Activated CD8-positive, alpha-beta T cell treated with anti-CD3 and anti-CD28 coated beads, Interleukin-2, amount 10 ng/mL, durations not matched to agents 7 days and 5 days (primary cell): ENCODE measurements at regions of chr14 and their contacts with region 1.

Region 1: GRCh38 chr14:81170104-81170828 is 50.5 kb downstream of the GTF2A1 start:
- DNase-seq: peak; percentile 92
- ATAC-seq: peak; percentile 100
- H3K4me3 Mint-ChIP-seq: peak overlapping the region; percentile 93
- H3K27ac Mint-ChIP-seq: peak overlapping the region; percentile 92
- H3K4me1 Mint-ChIP-seq: peaks cover 42% of the 10 kb centered on the region
- H3K27me3 Mint-ChIP-seq: no peaks in the 10 kb centered on the region

Region 2: DNA sequence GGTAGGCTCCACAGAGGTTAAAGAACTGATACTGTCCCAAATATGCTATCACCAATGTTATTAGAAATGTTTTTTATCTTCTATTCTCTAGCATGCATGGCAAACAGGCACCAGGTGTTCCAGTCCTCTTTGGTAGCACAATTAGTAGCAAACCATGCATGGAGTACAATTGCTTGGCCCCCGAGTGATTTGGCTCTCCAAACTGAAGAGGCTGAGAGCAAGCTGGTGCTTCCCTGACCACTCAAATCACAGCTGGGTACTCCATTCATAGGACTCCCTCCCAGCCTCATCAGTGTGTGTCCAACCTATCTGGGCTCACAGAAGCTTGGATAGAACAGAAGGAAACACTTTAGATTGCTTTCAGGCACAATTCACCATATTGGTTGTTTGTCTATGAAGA is 1052.4 kb before region 1 on chr14:
- CTCF ChIA-PET with region 1: no interaction called
- POLR2A ChIA-PET with region 1: no interaction called
- DNase-seq: no peak
- ATAC-seq: no peak
- H3K4me3 Mint-ChIP-seq: no peak overlapping the region
- H3K27ac Mint-ChIP-seq: no peak overlapping the region
- H3K4me1 Mint-ChIP-seq: no peaks in the 10 kb centered on the region
- H3K27me3 Mint-ChIP-seq: no peaks in the 10 kb centered on the region

Region 3: DNA sequence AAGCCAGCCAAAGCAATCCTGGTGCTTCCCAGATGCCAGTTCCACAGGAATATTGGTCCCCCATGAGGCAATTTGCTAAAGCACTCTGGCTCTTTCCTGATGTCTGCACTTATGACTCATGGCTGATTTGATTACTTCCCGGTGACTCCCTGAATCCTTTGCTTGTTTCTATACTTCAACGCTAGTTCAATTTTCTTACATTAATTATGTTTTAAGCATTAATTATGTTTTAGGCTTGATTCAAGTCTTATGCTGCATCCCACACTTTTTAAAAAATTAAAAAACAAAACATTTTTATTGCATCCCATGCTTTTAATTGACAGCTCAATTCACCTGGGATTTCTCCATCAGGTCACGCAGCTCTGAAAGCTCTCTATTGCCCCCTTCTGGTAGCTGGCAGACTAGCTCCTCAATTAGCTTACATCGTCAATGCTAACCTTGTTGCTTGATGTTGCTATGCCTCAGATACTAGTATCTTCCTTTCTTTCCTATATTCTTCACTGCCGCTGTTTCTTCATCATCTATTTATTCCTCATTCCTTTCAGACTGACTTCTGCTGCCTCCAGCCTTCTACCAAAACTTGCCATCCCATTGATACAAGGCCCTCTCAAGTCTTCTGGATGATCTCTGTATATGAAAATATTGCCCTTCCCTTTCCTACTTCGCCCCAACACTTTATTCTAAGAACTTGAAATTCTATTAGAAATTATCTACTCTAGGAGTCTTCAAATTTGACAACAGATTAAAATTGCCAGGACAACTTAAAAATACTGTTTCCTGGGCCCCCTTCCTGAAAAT is 182.8 kb before region 1 on chr14:
- CTCF ChIA-PET with region 1: interaction called, 36 read pairs
- POLR2A ChIA-PET with region 1: interaction called, 5 read pairs
- DNase-seq: peak; percentile 77
- ATAC-seq: peak; percentile 78
- H3K4me3 Mint-ChIP-seq: no peak overlapping the region
- H3K27ac Mint-ChIP-seq: no peak overlapping the region
- H3K4me1 Mint-ChIP-seq: peaks cover 6% of the 10 kb centered on the region
- H3K27me3 Mint-ChIP-seq: peaks cover 3% of the 10 kb centered on the region

Region 4: GRCh38 chr14:81042438-81042837 is 127.8 kb before region 1 on chr14:
- CTCF ChIA-PET with region 1: no interaction called
- POLR2A ChIA-PET with region 1: no interaction called
- DNase-seq: no peak
- ATAC-seq: no peak
- H3K4me3 Mint-ChIP-seq: no peak overlapping the region
- H3K27ac Mint-ChIP-seq: no peak overlapping the region
- H3K4me1 Mint-ChIP-seq: no peaks in the 10 kb centered on the region
- H3K27me3 Mint-ChIP-seq: peaks cover 9% of the 10 kb centered on the region

Region 5: GRCh38 chr14:81147140-81147897 is 22.9 kb before region 1 on chr14:
- CTCF ChIA-PET with region 1: interaction called, 11 read pairs
- POLR2A ChIA-PET with region 1: no interaction called
- DNase-seq: no peak
- ATAC-seq: no peak
- H3K4me3 Mint-ChIP-seq: no peak overlapping the region
- H3K27ac Mint-ChIP-seq: peak overlapping the region; percentile 39
- H3K4me1 Mint-ChIP-seq: peaks cover 13% of the 10 kb centered on the region
- H3K27me3 Mint-ChIP-seq: peaks cover 3% of the 10 kb centered on the region

Region 6: GRCh38 chr14:81187832-81188522 is 17.7 kb after region 1 on chr14:
- CTCF ChIA-PET with region 1: interaction called, 66 read pairs
- POLR2A ChIA-PET with region 1: interaction called, 3 read pairs
- DNase-seq: no peak
- ATAC-seq: no peak
- H3K4me3 Mint-ChIP-seq: no peak overlapping the region
- H3K27ac Mint-ChIP-seq: no peak overlapping the region
- H3K4me1 Mint-ChIP-seq: peaks cover 34% of the 10 kb centered on the region
- H3K27me3 Mint-ChIP-seq: no peaks in the 10 kb centered on the region

Region 7: DNA sequence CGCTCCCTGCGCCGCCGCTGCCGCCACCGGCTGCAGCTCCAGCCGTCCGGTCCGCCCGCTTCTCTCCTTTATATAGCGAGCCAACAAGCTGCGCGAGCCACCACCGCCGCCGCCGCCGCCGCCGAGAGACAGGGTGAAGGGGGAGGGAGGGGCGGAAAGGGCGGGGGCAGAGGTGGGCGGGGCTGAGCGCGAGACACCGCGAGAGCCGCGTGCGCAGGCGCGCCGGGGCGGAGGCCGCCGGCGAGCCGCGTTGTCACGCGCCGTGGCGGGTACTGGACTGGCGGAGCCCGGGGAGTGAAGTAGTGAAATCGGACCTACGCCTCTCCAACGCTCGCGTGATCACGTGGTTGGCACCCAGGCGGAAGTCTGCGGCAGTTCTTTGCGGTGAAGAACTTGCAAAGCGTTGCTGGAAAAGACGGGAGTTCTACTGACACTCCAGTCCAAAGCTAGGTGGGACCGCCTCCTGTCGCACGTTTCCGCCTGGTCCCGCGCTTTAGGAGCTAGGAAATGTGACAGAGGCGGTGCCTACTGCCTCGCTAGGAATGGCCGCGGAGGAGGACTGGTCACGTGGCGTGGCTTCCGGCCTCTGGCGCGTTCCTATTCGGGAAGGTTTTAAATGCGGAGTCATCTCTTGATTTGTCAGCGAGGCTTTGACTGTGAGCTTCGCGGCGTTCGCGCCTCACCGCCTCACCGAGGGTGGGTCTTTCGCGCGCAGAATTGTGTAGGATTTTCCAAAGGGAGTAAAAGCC is 50.7 kb after region 1 on chr14 and contains the start of gene GTF2A1:
- CTCF ChIA-PET with region 1: interaction called, 8 read pairs
- POLR2A ChIA-PET with region 1: interaction called, 14 read pairs
- DNase-seq: peak; percentile 94
- ATAC-seq: peak; percentile 80
- H3K4me3 Mint-ChIP-seq: peak within 1 kb of the TSS; percentile 97
- H3K27ac Mint-ChIP-seq: peak within 1 kb of the TSS; percentile 98
- H3K4me1 Mint-ChIP-seq: peaks cover 31% of the 10 kb centered on the region
- H3K27me3 Mint-ChIP-seq: peaks cover 2% of the 10 kb centered on the region
- total RNA-seq, gene GTF2A1: 33.6 to 33.7 TPM

Region 8: DNA sequence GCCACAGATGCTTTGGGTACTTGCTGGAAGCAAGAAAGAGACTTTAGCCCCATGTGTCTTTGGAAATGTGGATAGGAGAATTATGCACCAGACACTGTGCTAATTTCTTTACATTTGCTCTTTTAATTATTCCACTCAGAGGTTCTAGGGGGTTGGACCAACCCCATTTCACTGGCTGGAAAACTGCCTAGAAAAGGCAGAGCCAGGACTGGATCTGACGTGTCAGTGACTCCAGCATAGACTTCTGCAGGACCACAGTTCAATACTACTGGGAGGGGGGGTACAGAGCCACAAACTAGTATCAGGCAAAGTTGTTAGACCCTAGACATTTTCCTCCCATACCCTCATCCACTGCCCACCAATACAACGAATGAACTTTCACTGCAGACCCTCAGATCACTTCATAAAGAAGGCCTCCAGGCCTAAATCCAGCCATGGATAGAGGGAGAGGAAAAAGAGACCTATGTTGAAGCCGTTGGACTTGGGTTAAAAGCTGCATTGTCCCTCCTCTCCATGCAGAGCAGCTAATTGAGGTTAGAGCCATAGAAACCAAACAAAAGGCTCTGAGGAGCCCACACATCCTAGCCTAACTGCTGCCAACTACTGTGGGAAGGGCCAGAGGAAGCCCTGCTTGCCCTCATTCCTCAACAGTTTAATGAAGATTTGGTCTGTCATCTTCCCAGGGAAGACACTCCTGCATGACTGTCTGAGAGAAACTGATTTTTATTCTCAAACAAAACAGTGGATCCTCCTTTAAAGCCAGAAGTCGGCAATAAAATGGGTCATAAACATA is 161.2 kb after region 1 on chr14:
- CTCF ChIA-PET with region 1: no interaction called
- POLR2A ChIA-PET with region 1: no interaction called
- DNase-seq: no peak
- ATAC-seq: no peak
- H3K4me3 Mint-ChIP-seq: no peak overlapping the region
- H3K27ac Mint-ChIP-seq: no peak overlapping the region
- H3K4me1 Mint-ChIP-seq: no peaks in the 10 kb centered on the region
- H3K27me3 Mint-ChIP-seq: peaks cover 3% of the 10 kb centered on the region